Caco-2 (cell line): ENCODE measurements at regions of chr17 and their contacts with region 1.

Region 1: GRCh38 chr17:49880291-49881053 is 32.6 kb upstream of the TAC4 start:
- DNase-seq: peak; percentile 98 to 100
- H3K4me3 ChIP-seq: peak overlapping the region; percentile 4; the same call in 1 of the 2 replicates
- H3K4me3 Mint-ChIP-seq: peak overlapping the region; percentile 63
- H3K27ac Mint-ChIP-seq: peak overlapping the region; percentile 83
- H3K4me1 ChIP-seq: peaks cover 57% of the 10 kb centered on the region
- H3K4me1 Mint-ChIP-seq: peaks cover 39% of the 10 kb centered on the region
- H3K27me3 ChIP-seq: no peaks in the 10 kb centered on the region
- H3K27me3 Mint-ChIP-seq: no peaks in the 10 kb centered on the region
- CTCF ChIP-seq: peak; percentile 100

Region 2: DNA sequence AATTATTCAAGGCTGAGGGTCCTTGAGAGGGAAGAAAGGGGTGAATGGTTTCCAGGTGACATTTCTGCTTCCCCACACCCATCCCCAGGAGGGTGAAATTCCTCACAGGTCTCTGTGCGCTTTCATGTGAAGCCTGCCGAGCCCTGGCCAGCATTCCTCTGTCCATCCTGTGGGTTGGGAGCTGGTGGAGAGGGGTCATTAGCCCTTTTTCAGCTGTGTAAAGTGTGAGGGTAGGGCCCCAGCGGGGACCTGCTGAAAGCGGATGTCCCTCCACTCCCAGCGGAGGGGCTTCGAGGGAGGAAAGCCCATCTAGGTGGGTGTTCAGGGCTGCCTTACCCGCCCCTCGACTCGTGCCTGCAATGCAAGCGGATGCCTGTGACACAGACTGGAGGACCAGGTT is 35.2 kb after region 1 on chr17:
- CTCF ChIA-PET with region 1: interaction called, 9 read pairs
- POLR2A ChIA-PET with region 1: no interaction called
- intact Hi-C with region 1: loop called (anchors 1 kb)
- DNase-seq: peak; percentile 88 to 93
- H3K4me3 ChIP-seq: no peak overlapping the region
- H3K4me3 Mint-ChIP-seq: peak overlapping the region; percentile 8
- H3K27ac Mint-ChIP-seq: peak overlapping the region; percentile 64
- H3K4me1 ChIP-seq: peaks cover 46% of the 10 kb centered on the region
- H3K4me1 Mint-ChIP-seq: peaks cover 52% of the 10 kb centered on the region
- H3K27me3 ChIP-seq: no peaks in the 10 kb centered on the region
- H3K27me3 Mint-ChIP-seq: no peaks in the 10 kb centered on the region
- CTCF ChIP-seq: no peak

Region 3: GRCh38 chr17:49997791-49998703 is 117.6 kb after region 1 on chr17:
- CTCF ChIA-PET with region 1: interaction called, 8 read pairs
- POLR2A ChIA-PET with region 1: no interaction called
- intact Hi-C with region 1: loop called (anchors 1 kb)
- DNase-seq: peak; percentile 76 to 82
- H3K4me3 ChIP-seq: no peak overlapping the region
- H3K4me3 Mint-ChIP-seq: peak overlapping the region; percentile 31
- H3K27ac Mint-ChIP-seq: no peak overlapping the region
- H3K4me1 ChIP-seq: no peaks in the 10 kb centered on the region
- H3K4me1 Mint-ChIP-seq: peaks cover 14% of the 10 kb centered on the region
- H3K27me3 ChIP-seq: no peaks in the 10 kb centered on the region
- H3K27me3 Mint-ChIP-seq: peaks cover 14% of the 10 kb centered on the region
- CTCF ChIP-seq: peak; percentile 63 to 72

Region 4: GRCh38 chr17:50102164-50102991 is 221.9 kb after region 1 on chr17:
- CTCF ChIA-PET with region 1: no interaction called
- POLR2A ChIA-PET with region 1: no interaction called
- intact Hi-C with region 1: no loop called
- DNase-seq: no peak
- H3K4me3 ChIP-seq: no peak overlapping the region
- H3K4me3 Mint-ChIP-seq: no peak overlapping the region
- H3K27ac Mint-ChIP-seq: no peak overlapping the region
- H3K4me1 ChIP-seq: no peaks in the 10 kb centered on the region
- H3K4me1 Mint-ChIP-seq: no peaks in the 10 kb centered on the region
- H3K27me3 ChIP-seq: no peaks in the 10 kb centered on the region
- H3K27me3 Mint-ChIP-seq: no peaks in the 10 kb centered on the region
- CTCF ChIP-seq: no peak

Region 5: GRCh38 chr17:50139950-50140871 is 259.7 kb after region 1 on chr17:
- CTCF ChIA-PET with region 1: no interaction called
- POLR2A ChIA-PET with region 1: no interaction called
- intact Hi-C with region 1: loop called (anchors 2 kb)
- DNase-seq: peak; percentile 89 to 93
- H3K4me3 ChIP-seq: no peak overlapping the region
- H3K4me3 Mint-ChIP-seq: no peak overlapping the region
- H3K27ac Mint-ChIP-seq: no peak overlapping the region
- H3K4me1 ChIP-seq: no peaks in the 10 kb centered on the region
- H3K4me1 Mint-ChIP-seq: peaks cover 4% of the 10 kb centered on the region
- H3K27me3 ChIP-seq: no peaks in the 10 kb centered on the region
- H3K27me3 Mint-ChIP-seq: no peaks in the 10 kb centered on the region
- CTCF ChIP-seq: peak; percentile 99 to 100

Region 6: GRCh38 chr17:50161023-50161910 is 280.8 kb after region 1 on chr17:
- CTCF ChIA-PET with region 1: interaction called, 6 read pairs
- POLR2A ChIA-PET with region 1: no interaction called
- intact Hi-C with region 1: loop called (anchors 1 kb)
- DNase-seq: peak; percentile 96 to 100
- H3K4me3 ChIP-seq: peak overlapping the region; percentile 48
- H3K4me3 Mint-ChIP-seq: peak overlapping the region; percentile 67
- H3K27ac Mint-ChIP-seq: peak overlapping the region; percentile 2
- H3K4me1 ChIP-seq: peaks cover 17% of the 10 kb centered on the region
- H3K4me1 Mint-ChIP-seq: peaks cover 13% of the 10 kb centered on the region
- H3K27me3 ChIP-seq: no peaks in the 10 kb centered on the region
- H3K27me3 Mint-ChIP-seq: peaks cover 9% of the 10 kb centered on the region
- CTCF ChIP-seq: peak; percentile 99 to 100

Region 7: DNA sequence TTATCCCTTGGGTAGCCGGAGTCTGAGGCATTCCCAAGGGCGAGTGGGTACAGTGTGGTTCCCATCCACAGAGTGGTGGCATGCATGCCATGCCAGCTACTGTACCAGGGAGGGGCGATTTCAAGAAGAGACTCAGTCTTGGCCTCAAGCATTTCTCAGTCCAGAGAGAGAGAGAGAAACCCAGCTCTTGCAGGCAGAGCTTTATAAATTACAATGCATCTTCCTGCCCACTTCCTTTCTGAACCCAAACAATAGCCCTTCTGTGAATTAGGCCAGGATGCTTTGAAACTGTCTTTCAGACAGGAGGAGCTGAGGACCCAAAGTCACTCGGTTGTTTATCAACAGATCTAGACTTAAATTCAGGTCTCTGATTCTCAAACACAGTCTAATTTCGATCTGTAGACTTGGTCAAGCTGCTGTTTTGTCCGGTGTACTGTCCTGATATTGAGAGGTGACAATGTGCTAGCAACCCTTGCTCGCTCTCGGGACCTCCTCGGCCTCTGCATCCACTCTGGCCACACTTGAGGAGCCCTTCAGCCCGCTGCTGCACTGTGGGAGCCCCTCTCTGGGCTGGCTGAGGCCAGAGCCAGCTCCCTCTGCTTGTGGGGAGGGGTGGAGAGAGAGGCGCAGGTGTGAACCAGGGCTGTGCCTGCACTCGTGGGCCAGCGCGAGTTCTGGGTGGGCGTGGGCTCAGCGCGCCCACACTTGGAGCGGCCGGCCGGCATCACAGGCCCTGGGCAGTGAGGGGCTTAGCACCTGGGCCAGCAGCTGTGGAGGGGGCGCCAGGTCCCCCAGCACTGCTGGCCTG is 1787.9 kb after region 1 on chr17:
- CTCF ChIA-PET with region 1: no interaction called
- POLR2A ChIA-PET with region 1: no interaction called
- intact Hi-C with region 1: no loop called
- DNase-seq: no peak
- H3K4me3 ChIP-seq: no peak overlapping the region
- H3K4me3 Mint-ChIP-seq: no peak overlapping the region
- H3K27ac Mint-ChIP-seq: no peak overlapping the region
- H3K4me1 ChIP-seq: no peaks in the 10 kb centered on the region
- H3K4me1 Mint-ChIP-seq: no peaks in the 10 kb centered on the region
- H3K27me3 ChIP-seq: no peaks in the 10 kb centered on the region
- H3K27me3 Mint-ChIP-seq: peaks cover 13% of the 10 kb centered on the region
- CTCF ChIP-seq: no peak